Gastrocnemius medialis (tissue), 4 donors: ENCODE measurements at regions of chr2 and their contacts with region 1.

Region 1: GRCh38 chr2:71923887-71924533 is 223.7 kb downstream of the CYP26B1 start:
- DNase-seq: peak; percentile 42 to 70
- ATAC-seq: peak; percentile 90 to 95
- H3K4me3 ChIP-seq: no peak overlapping the region
- H3K27ac ChIP-seq: no peak overlapping the region
- H3K4me1 ChIP-seq: no peaks in the 10 kb centered on the region
- H3K27me3 ChIP-seq: no peaks in the 10 kb centered on the region
- CTCF ChIP-seq: peak; percentile 72 to 94 (median 90)
- POLR2A ChIP-seq: no peak

Region 2: DNA sequence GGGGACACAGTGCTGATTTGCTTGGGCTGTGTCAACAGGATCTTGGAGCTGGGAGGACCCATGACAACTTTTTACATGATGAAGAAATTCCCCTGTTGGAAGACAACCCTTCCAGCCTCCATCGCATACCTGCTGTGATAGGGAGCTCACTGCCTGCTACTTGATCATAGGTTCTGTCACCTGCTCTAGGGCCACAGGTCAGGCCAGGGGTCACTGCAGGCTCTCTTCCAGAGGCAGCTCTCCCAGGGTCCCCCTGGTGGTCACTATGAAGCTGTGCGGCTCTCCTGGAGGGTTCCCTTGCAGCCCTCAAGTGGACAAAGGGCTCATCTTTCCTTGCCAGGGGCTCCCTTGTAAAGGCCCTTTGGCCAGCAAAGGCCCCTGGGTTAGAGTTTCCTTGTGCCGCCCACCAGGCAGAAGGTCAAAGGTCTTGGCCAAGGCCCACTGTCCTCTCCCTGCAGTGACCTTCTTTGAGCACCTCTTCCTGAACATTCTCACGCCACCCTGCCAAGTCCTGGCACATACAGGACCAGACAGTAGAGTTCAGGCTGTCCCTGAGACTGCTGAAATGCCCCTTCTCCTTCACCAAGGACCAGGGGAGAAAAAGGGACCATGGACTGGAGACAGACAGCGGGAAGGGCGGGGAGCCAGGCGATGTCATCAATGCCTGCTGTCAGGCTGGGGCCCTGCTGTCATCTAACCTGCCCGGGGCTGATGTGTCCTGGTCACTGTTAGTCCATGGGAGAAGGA is 125.6 kb before region 1 on chr2:
- in situ Hi-C with region 1: loop called in 2 of 4 experiments (anchors 10 kb)
- intact Hi-C with region 1: loop called (anchors 2 kb)
- DNase-seq: peak in 1 of 2 donors; percentile 31
- ATAC-seq: peak; percentile 37 to 58
- H3K4me3 ChIP-seq: no peak overlapping the region
- H3K27ac ChIP-seq: no peak overlapping the region
- H3K4me1 ChIP-seq: peaks cover 6 to 14% of the 10 kb centered on the region in 2 donors
- H3K27me3 ChIP-seq: no peaks in the 10 kb centered on the region
- CTCF ChIP-seq: peak; percentile 68 to 87 (median 82)
- POLR2A ChIP-seq: no peak

Region 3: DNA sequence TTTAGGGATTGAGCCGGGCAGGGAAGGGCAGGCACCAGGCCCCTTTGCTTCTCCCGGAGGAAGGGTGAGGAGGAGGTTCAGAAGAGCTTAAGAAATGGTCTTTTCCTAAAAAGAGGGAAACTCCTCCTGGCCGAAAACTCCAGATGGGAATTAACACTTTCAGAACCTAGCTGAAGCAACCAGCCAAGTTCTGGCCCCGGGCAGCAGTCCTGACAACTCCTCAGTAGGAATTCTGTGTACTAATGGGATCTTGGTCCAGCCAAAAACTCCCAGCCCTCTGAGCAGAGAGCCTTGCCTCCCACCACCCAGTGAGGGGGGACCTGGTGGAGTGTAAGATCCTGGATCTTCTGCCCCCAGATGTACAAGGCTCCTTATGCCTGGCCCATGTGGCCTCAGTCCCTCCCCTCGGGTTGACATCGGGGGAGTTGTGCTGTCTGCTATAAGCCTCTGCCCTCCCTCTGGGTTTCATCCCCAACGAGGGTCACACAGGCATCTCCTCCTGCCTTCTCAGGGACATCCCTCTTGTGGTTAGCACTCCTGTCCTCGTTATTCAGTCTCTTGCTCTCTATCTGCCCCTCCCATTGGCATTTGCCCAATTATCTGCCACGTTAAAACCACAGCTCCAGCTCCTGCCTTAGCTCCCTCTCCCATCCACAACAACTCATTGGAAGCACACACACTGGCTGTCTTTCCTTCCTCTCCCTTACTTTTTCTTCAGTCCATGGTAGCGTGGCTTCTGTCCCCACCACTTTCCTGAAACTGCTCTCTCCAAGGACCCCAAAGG is 39.1 kb after region 1 on chr2:
- in situ Hi-C with region 1: no loop called
- intact Hi-C with region 1: no loop called
- DNase-seq: no peak
- ATAC-seq: no peak
- H3K4me3 ChIP-seq: no peak overlapping the region
- H3K27ac ChIP-seq: no peak overlapping the region
- H3K4me1 ChIP-seq: peaks cover 6 to 11% of the 10 kb centered on the region in 2 donors
- H3K27me3 ChIP-seq: no peaks in the 10 kb centered on the region
- CTCF ChIP-seq: no peak
- POLR2A ChIP-seq: no peak

Region 4: GRCh38 chr2:71989671-71990070 is 65.7 kb after region 1 on chr2:
- in situ Hi-C with region 1: loop called (anchors 5 to 10 kb)
- intact Hi-C with region 1: loop called (anchors 1 kb)
- DNase-seq: no peak
- ATAC-seq: no peak
- H3K4me3 ChIP-seq: no peak overlapping the region
- H3K27ac ChIP-seq: no peak overlapping the region
- H3K4me1 ChIP-seq: no peaks in the 10 kb centered on the region
- H3K27me3 ChIP-seq: no peaks in the 10 kb centered on the region
- CTCF ChIP-seq: no peak
- POLR2A ChIP-seq: no peak

Region 5: GRCh38 chr2:72579591-72580180 is 655.7 kb after region 1 on chr2:
- in situ Hi-C with region 1: loop called in 1 of 4 experiments (anchors 10 kb)
- intact Hi-C with region 1: loop called (anchors 5 kb)
- DNase-seq: no peak
- ATAC-seq: peak in 1 of 2 donors; percentile 71
- H3K4me3 ChIP-seq: no peak overlapping the region
- H3K27ac ChIP-seq: no peak overlapping the region
- H3K4me1 ChIP-seq: peaks cover 0 to 9% of the 10 kb centered on the region in 2 donors
- H3K27me3 ChIP-seq: no peaks in the 10 kb centered on the region
- CTCF ChIP-seq: peak in 4 of 5 experiments; percentile 50 to 70 (median 59)
- POLR2A ChIP-seq: no peak